Transverse colon (tissue), 4 donors: ENCODE measurements at regions of chr15 and their contacts with region 1.

Region 1: DNA sequence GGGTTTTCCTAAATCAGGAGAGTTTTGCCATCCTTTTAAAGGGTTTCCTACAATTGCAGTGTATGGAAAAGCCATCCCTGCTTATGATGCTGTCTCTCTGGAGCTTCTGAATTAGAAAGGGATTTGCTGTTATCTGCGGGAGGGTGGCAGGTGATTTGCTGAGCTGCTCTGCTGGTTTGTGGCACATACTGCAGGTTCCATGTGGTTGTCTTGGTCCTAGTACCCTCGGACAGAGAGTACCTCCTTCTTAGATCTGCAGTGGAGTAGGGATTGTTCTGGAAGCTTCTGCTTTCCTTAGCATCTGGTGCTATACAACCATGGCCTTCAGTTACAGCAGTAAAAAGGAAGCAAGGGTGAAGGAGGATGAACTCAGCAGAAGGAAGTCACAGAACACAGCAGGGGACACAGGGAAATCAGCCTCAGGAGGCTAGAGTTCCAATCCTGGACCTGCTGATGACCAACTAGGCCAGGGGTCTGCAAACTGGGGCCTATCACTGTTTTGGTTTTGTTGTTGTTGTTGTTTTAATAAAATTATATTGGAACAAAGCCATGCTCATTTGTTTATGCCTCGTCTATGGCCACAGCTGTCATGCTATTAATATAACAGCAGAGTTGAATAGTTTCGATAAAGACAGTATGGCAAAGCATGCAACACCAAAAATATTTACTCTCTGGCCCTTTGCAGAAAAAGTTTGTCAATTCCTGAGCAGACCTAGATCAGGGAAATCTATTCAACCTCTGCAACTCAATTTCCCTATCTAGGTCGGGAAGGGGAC is 39.5 kb downstream of the STARD5 start:
- DNase-seq: peak; percentile 5
- H3K4me3 ChIP-seq: no peak overlapping the region
- H3K27ac ChIP-seq: peak overlapping the region in 3 of 4 donors; percentile 22 to 55 (median 36)
- H3K4me1 ChIP-seq: peaks cover 4 to 22% (median 12%) of the 10 kb centered on the region in 4 donors
- H3K27me3 ChIP-seq: no peaks in the 10 kb centered on the region
- CTCF ChIP-seq: no peak
- EP300 ChIP-seq: no peak
- POLR2A ChIP-seq: no peak

Region 2: GRCh38 chr15:81091889-81092558 is 192.4 kb before region 1 on chr15:
- in situ Hi-C with region 1: no loop called
- intact Hi-C with region 1: no loop called
- DNase-seq: no peak
- H3K4me3 ChIP-seq: no peak overlapping the region
- H3K27ac ChIP-seq: no peak overlapping the region
- H3K4me1 ChIP-seq: peaks cover 0 to 5% (median 0%) of the 10 kb centered on the region in 4 donors
- H3K27me3 ChIP-seq: no peaks in the 10 kb centered on the region
- CTCF ChIP-seq: no peak
- EP300 ChIP-seq: no peak
- POLR2A ChIP-seq: no peak

Region 3: DNA sequence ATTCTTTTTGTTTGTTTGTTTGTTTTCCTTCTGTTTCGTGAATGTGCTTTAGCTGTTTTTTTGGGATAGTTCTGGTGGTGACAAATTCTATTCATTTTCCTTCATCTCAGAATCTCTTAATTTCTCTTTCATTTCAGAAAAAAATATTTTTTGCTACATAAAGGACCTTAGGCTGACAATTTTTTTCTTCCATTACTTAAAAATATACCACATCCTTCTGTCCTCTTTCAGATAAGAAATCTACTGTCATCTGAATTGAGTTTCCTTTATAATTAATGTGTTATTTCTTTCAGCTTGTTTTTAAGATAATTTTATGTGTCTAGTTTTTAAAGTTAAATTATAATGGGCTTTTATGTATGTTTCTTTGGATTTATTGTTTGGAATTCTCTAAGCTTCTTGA is 40.1 kb before region 1 on chr15:
- in situ Hi-C with region 1: no loop called
- intact Hi-C with region 1: no loop called
- DNase-seq: no peak
- H3K4me3 ChIP-seq: no peak overlapping the region
- H3K27ac ChIP-seq: no peak overlapping the region
- H3K4me1 ChIP-seq: no peaks in the 10 kb centered on the region
- H3K27me3 ChIP-seq: no peaks in the 10 kb centered on the region
- CTCF ChIP-seq: no peak
- EP300 ChIP-seq: no peak
- POLR2A ChIP-seq: no peak

Region 4: DNA sequence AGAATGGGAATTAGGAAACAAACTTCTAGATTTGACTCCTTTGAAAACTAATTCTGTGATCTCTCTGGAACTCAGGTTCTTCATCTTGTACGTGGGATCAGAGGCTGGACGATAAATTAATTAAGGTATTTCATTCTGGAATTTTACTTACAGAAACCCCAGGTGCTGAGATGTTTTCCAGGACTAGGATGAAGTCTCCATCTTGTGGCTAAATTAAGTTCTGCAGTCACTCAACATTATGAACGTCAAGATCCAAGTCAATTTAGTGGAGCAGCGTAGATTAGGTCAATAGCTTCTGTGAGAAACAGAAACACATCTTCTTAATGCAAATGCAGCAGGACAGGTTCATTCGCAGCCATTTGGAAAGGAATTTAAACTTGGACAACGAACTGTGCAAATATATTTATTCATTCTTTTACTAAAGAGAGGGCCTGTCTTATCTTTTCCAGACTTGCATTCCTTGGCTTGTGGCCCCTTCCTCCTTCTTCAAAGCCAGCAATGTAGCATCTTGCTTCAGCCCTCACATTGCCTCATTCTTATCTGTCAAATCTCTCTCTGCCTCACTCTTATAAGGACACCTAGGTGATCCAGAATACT is 116.3 kb after region 1 on chr15:
- in situ Hi-C with region 1: loop called in 2 of 4 experiments (anchors 5 kb)
- intact Hi-C with region 1: no loop called
- DNase-seq: no peak
- H3K4me3 ChIP-seq: no peak overlapping the region
- H3K27ac ChIP-seq: no peak overlapping the region
- H3K4me1 ChIP-seq: peaks cover 0 to 21% (median 0%) of the 10 kb centered on the region in 4 donors
- H3K27me3 ChIP-seq: peaks cover 4% of the 10 kb centered on the region
- CTCF ChIP-seq: peak; percentile 76 to 87 (median 84)
- EP300 ChIP-seq: no peak
- POLR2A ChIP-seq: no peak

Region 5: GRCh38 chr15:81466741-81467140 is 182.3 kb after region 1 on chr15:
- in situ Hi-C with region 1: no loop called
- intact Hi-C with region 1: no loop called
- DNase-seq: no peak
- H3K4me3 ChIP-seq: no peak overlapping the region
- H3K27ac ChIP-seq: no peak overlapping the region
- H3K4me1 ChIP-seq: no peaks in the 10 kb centered on the region
- H3K27me3 ChIP-seq: no peaks in the 10 kb centered on the region
- CTCF ChIP-seq: no peak
- EP300 ChIP-seq: no peak
- POLR2A ChIP-seq: no peak